Activated B cell treated with CpG ODN at 0.5 μM for 24 hours (primary cell): ENCODE measurements at regions of chr2 and their contacts with region 1.

Region 1: DNA sequence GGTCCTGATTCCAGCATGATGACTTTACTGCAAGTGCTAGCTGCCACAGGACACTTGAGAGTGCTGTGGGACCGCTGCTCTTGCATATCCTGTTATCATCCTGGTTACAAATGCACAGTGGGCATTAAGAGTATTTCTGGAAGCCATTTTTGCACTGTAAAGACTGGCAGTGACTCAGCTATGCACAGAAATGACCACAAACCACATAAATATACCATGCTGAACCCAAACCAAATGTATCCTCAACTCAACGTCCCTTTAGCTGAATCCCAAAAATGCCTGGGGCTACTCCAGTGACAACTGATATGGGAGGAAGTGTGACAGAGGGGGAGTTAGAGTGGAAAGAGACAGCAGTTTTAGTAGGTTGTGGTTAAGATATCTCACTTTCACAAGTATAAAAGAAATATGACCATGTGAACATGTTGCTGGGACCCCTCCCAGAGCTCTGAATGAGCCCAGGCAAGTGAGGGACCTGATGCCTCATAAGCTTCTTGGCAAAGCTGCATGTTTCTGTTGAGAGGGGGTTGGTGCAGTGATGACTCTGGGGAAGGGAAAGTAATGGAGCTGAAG is 37.3 kb downstream of the RHBDD1 start:
- DNase-seq: no peak
- ATAC-seq: no peak
- H3K4me3 Mint-ChIP-seq: no peak overlapping the region
- H3K27ac Mint-ChIP-seq: no peak overlapping the region
- H3K4me1 Mint-ChIP-seq: peaks cover 34% of the 10 kb centered on the region
- H3K27me3 Mint-ChIP-seq: no peaks in the 10 kb centered on the region
- CTCF ChIP-seq: no peak

Region 2: DNA sequence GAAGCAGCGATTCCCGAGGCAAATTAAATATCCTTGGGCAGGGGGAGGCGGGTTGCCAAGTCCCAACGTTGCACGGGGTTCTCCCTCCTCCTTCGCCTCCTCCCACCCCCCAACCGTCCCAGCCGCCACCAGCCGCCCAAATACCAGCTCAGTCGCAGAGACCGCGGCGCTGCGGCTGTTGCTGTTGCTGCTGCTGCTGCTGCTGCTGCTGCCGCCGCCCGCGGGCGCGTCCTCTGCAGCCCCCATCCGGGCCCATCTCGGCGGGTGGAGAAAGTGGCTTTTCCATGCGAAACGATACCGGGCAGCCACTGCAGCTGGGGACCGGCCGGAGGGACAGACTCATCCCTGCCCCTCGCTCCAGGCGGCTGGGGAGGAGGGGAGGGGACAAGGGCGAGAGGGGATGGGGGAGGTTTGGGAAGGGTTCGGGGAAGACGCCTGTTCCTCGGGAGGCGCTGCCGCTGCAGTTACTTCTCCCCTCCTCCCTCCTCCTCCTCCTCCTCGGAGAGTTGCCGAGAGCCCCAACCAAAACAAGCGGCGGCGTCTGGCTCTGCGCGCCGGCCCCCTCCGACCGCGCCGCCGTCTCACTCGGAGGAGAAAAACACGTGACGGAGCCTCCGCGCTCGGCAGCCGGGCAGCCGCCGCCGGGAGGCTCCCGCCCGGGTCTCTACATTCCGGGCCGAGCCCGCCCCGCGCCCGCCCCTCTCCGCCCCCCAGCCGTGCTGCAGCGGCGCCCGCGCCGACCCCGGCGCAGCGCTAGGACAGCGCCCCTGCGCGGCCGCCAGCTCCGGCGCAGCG is 73.8 kb before region 1 on chr2 and contains the start of gene IRS1:
- CTCF ChIA-PET with region 1: no interaction called
- POLR2A ChIA-PET with region 1: no interaction called
- intact Hi-C with region 1: no loop called
- DNase-seq: peak; percentile 59
- ATAC-seq: peak; percentile 47
- H3K4me3 Mint-ChIP-seq: peak within 1 kb of the TSS; percentile 92
- H3K27ac Mint-ChIP-seq: peak within 1 kb of the TSS; percentile 77
- H3K4me1 Mint-ChIP-seq: peaks cover 38% of the 10 kb centered on the region
- H3K27me3 Mint-ChIP-seq: peaks cover under 1% of the 10 kb centered on the region
- CTCF ChIP-seq: no peak
- total RNA-seq, gene IRS1: 3.2 and 3.6 TPM in 2 replicates

Region 3: DNA sequence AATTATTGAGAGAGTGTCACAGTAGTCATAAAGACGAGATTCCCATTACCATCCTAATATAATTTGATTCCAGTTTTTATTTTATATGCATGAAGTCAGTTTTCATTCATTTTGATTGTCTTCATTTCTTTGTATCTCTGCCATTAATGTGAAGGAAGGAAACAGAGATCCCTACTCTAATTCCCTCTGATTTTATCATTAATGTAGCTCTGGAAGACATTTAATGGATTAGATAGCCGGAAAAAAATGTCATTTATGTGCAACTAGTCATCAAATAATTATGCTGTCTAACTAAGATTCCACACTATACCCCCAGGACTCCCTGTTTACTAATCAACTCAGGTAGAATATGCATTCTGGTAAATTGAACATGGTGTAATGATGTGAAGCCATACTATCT is 17.4 kb before region 1 on chr2:
- CTCF ChIA-PET with region 1: no interaction called
- POLR2A ChIA-PET with region 1: no interaction called
- intact Hi-C with region 1: loop called (anchors 2 kb)
- DNase-seq: no peak
- ATAC-seq: no peak
- H3K4me3 Mint-ChIP-seq: no peak overlapping the region
- H3K27ac Mint-ChIP-seq: no peak overlapping the region
- H3K4me1 Mint-ChIP-seq: peaks cover 19% of the 10 kb centered on the region
- H3K27me3 Mint-ChIP-seq: no peaks in the 10 kb centered on the region
- CTCF ChIP-seq: no peak

Region 4: GRCh38 chr2:226885769-226886435 is 12.8 kb after region 1 on chr2:
- CTCF ChIA-PET with region 1: no interaction called
- POLR2A ChIA-PET with region 1: no interaction called
- intact Hi-C with region 1: loop called (anchors 1 kb)
- DNase-seq: no peak
- ATAC-seq: no peak
- H3K4me3 Mint-ChIP-seq: no peak overlapping the region
- H3K27ac Mint-ChIP-seq: no peak overlapping the region
- H3K4me1 Mint-ChIP-seq: peaks cover 8% of the 10 kb centered on the region
- H3K27me3 Mint-ChIP-seq: no peaks in the 10 kb centered on the region
- CTCF ChIP-seq: no peak

Region 5: DNA sequence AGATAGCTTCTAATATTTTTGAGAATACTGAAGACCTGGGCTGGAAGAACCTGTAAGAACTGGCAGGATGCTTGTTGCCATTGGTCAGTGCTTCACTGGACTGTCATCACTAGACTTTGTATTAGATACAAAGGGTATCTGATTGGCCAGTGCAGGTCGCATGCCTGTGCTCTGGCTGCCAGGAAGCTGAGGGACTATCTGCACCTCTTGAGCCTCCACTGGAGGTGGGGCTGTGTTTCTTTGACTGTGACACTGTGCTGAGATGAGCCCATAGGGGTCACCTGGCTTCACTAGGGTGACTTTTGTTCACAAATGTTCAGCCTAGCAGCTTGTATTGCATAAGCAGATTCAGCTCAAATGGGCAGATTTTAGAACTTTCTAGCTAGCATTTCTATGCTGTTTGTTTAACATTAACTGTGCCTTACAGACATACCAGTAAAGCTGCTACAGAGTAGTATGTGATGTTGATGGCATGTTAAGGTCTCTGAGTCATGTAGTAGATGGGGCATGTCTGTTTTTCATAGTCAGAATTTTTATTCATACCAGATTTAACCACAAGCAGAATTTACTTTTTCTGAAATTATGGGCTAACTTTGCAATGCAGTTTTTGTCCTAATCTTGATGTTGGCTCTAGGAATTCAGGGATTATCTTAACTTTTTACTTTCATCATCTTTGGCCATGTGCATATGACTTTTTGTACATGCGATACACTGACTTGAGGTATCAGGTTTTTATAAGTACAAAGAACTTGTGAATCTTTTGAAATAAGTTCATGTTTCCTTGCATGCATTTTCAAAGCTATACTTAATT is 18.8 kb after region 1 on chr2:
- CTCF ChIA-PET with region 1: no interaction called
- POLR2A ChIA-PET with region 1: no interaction called
- intact Hi-C with region 1: loop called (anchors 2 kb)
- DNase-seq: no peak
- ATAC-seq: peak; percentile 58
- H3K4me3 Mint-ChIP-seq: no peak overlapping the region
- H3K27ac Mint-ChIP-seq: peak overlapping the region; percentile 14
- H3K4me1 Mint-ChIP-seq: peaks cover 19% of the 10 kb centered on the region
- H3K27me3 Mint-ChIP-seq: no peaks in the 10 kb centered on the region
- CTCF ChIP-seq: no peak